ENCODE measurements at regions of chr17 and their contacts with region 1.

Region 1: DNA sequence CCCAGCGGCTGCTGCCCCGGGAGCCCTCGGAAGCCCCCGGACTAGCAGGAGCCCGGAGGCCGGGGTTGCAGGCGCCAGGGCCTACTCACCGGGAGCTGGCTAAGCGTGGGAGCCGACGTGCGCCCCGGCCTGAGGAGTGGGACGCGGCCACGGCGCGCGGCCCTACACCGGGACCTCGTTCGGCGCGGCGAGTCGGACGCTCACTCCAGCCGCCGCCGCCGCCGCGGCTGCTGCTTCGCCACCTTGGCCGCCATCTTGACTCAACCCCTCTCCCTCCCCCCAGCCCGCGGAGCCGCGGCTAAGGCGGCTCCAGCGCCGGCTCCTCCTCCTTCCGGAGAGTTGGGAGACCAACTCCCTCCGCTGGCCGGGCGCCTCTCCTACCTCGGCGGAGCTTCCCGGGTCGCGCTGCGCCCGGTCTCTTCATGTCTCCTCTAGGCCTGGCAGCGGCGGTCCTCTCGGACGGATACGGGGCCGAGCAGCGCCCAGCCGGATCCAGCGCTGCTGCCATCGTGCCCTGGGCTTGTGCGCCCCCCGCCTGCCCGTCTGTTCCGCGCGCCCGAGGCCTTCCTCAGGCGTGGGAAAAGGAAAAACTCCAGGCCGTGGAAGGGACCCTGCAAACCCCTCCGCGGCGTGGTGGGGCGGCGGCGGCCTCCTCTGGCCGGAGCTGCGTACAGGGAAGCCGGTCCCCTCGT is at the start of gene NCOR1:
- DNase-seq: peak; percentile 85
- H3K4me3 Mint-ChIP-seq: peak within 1 kb of the TSS; percentile 88
- H3K27ac Mint-ChIP-seq: peak within 1 kb of the TSS; percentile 81
- H3K4me1 Mint-ChIP-seq: peaks cover 29% of the 10 kb centered on the region
- H3K27me3 Mint-ChIP-seq: no peaks in the 10 kb centered on the region
- total RNA-seq, gene NCOR1: 134 and 139 TPM in 2 replicates

Region 2: GRCh38 chr17:16027708-16028584 is 187.5 kb before region 1 on chr17:
- intact Hi-C with region 1: loop called (anchors 2 kb)
- DNase-seq: peak; percentile 15
- H3K4me3 Mint-ChIP-seq: peak overlapping the region; percentile 60
- H3K27ac Mint-ChIP-seq: peak overlapping the region; percentile 91
- H3K4me1 Mint-ChIP-seq: peaks cover 29% of the 10 kb centered on the region
- H3K27me3 Mint-ChIP-seq: no peaks in the 10 kb centered on the region

Region 3: GRCh38 chr17:16171616-16172015 is 43.8 kb before region 1 on chr17:
- intact Hi-C with region 1: loop called (anchors 10 kb)
- DNase-seq: no peak
- H3K4me3 Mint-ChIP-seq: no peak overlapping the region
- H3K27ac Mint-ChIP-seq: no peak overlapping the region
- H3K4me1 Mint-ChIP-seq: peaks cover 10% of the 10 kb centered on the region
- H3K27me3 Mint-ChIP-seq: no peaks in the 10 kb centered on the region

Region 4: DNA sequence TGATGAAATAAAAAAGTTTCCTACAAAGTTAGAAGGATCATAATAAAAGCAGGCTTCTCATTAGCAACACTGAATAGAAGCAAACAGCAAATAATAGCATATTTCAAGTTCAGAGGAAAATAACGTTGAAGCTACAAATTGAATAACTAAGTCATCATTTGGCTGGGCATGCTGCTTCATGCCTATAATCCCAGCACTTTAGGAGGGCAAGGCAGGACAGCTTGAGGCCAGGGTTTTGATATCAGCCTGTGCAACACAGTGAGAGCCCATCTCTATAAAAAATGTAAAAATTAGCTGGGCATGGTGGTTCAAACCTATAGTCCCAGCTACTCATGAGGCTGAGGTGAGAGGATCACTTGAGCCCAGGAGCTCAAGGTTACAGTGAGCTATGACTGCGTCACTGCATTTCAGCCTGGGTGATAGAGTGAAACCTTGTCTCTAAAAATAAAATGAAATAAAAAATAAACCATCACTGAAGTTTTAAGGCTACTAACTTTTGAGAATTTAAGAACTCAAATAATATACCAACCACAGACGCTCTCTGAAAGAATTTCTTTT is 25.5 kb before region 1 on chr17:
- intact Hi-C with region 1: no loop called
- DNase-seq: no peak
- H3K4me3 Mint-ChIP-seq: no peak overlapping the region
- H3K27ac Mint-ChIP-seq: no peak overlapping the region
- H3K4me1 Mint-ChIP-seq: peaks cover 12% of the 10 kb centered on the region
- H3K27me3 Mint-ChIP-seq: no peaks in the 10 kb centered on the region

Region 5: GRCh38 chr17:16232391-16232790 is 17.0 kb after region 1 on chr17:
- intact Hi-C with region 1: loop called (anchors 1 kb)
- DNase-seq: no peak
- H3K4me3 Mint-ChIP-seq: no peak overlapping the region
- H3K27ac Mint-ChIP-seq: no peak overlapping the region
- H3K4me1 Mint-ChIP-seq: peaks cover 18% of the 10 kb centered on the region
- H3K27me3 Mint-ChIP-seq: no peaks in the 10 kb centered on the region

Region 6: GRCh38 chr17:16285957-16286640 is 70.7 kb after region 1 on chr17:
- intact Hi-C with region 1: loop called (anchors 1 kb)
- DNase-seq: peak; percentile 79
- H3K4me3 Mint-ChIP-seq: peak overlapping the region; percentile 61
- H3K27ac Mint-ChIP-seq: peak overlapping the region; percentile 97
- H3K4me1 Mint-ChIP-seq: peaks cover 51% of the 10 kb centered on the region
- H3K27me3 Mint-ChIP-seq: no peaks in the 10 kb centered on the region

Region 7: GRCh38 chr17:16353317-16354174 is 138.1 kb after region 1 on chr17 and contains the start of gene CENPV:
- intact Hi-C with region 1: loop called (anchors 10 kb)
- DNase-seq: peak; percentile 49
- H3K4me3 Mint-ChIP-seq: peak within 1 kb of the TSS; percentile 97
- H3K27ac Mint-ChIP-seq: peak within 1 kb of the TSS; percentile 71
- H3K4me1 Mint-ChIP-seq: peaks cover 17% of the 10 kb centered on the region
- H3K27me3 Mint-ChIP-seq: peaks cover 17% of the 10 kb centered on the region
- total RNA-seq, gene CENPV: 65.8 and 69.9 TPM in 2 replicates

Measured in activated T-helper 2 cell treated with anti-CD3 and anti-CD28 coated beads, Interferon-gamma antibody, Interleukin-2, Interleukin-4, amounts not matched to agents 10 μg/mL and 5 μg/mL and 100 μg/mL, durations not matched to agents 14 hours and 24 hours and 36 hours (primary cell).